PC-3 (cell line): ENCODE measurements at regions of chrX and their contacts with region 1.

Region 1: GRCh38 chrX:80578517-80579105 is 158.4 kb downstream of the TENT5D start:
- DNase-seq: peak; percentile 55
- ATAC-seq: peak; percentile 50; the same call in 1 of the 2 replicates
- H3K4me3 ChIP-seq: no peak overlapping the region
- H3K27ac ChIP-seq: no peak overlapping the region
- H3K4me1 ChIP-seq: no peaks in the 10 kb centered on the region
- H3K27me3 ChIP-seq: no peaks in the 10 kb centered on the region
- CTCF ChIP-seq: peak; percentile 67

Region 2: GRCh38 chrX:80335062-80335830 is 243.4 kb before region 1 on chrX:
- CTCF ChIA-PET with region 1: no interaction called
- POLR2A ChIA-PET with region 1: no interaction called
- intact Hi-C with region 1: loop called (anchors 2 kb)
- DNase-seq: peak; percentile 63
- ATAC-seq: peak; percentile 96
- H3K4me3 ChIP-seq: peak overlapping the region; percentile 82
- H3K27ac ChIP-seq: no peak overlapping the region
- H3K4me1 ChIP-seq: peaks cover 8% of the 10 kb centered on the region; the same call in 1 of the 2 replicates
- H3K27me3 ChIP-seq: no peaks in the 10 kb centered on the region
- CTCF ChIP-seq: peak; percentile 37; the same call in 1 of the 2 replicates

Region 3: DNA sequence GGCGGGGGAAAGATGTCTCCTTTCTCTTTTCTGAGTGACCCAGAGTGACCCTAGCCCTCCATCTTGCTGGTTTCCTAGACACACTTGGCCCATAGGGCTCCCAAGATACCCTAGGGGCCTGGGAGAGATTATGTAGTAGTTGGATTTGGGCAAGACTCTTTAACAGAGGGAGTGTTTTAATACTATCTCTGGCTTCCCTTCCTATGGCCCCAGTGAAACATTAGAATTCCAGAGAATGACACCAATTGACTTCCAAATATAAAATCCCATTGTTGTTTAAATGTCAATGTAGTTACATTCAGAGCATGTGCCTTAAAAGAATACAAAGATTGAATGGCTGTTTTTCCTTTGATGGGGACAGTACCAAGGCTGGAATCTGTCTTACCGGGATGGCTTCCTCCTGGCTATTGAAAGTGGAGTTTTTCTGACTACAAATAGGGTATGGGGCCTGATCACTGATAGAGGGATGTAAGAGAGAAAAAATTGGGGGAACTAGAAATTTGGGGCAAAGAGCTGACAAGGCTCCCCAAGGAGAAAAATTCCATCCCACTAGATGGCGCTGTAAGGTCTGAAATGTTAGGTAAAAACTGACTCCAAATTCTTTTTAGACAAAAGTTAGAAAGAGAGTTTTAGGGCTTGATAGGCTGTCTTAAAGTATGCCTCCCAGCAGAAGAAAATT is 147.6 kb before region 1 on chrX:
- CTCF ChIA-PET with region 1: no interaction called
- POLR2A ChIA-PET with region 1: no interaction called
- intact Hi-C with region 1: loop called (anchors 1 kb)
- DNase-seq: peak; percentile 9
- ATAC-seq: no peak
- H3K4me3 ChIP-seq: no peak overlapping the region
- H3K27ac ChIP-seq: no peak overlapping the region
- H3K4me1 ChIP-seq: no peaks in the 10 kb centered on the region
- H3K27me3 ChIP-seq: no peaks in the 10 kb centered on the region
- CTCF ChIP-seq: peak; percentile 45

Region 4: DNA sequence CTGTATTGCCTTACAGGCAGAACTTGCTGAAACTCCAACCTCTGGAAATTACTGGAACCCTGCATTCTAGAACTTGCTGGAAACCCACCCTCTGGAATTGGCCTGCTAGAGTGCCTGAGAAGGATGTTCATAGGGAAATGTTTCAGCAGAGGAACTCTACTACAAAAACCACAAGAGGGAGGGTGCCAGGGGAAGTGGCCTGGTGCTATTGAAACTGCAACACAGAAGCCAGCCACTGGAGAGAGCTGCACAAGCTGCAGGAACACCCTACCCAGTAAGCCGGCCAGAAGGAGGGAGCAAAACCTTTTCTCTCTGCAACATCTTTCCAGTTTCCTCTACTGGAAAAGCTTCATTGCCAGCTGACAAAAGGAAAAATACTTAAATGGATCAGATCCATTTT is 233.6 kb after region 1 on chrX:
- CTCF ChIA-PET with region 1: no interaction called
- POLR2A ChIA-PET with region 1: no interaction called
- intact Hi-C with region 1: no loop called
- DNase-seq: peak; percentile 26
- ATAC-seq: no peak
- H3K4me3 ChIP-seq: no peak overlapping the region
- H3K27ac ChIP-seq: no peak overlapping the region
- H3K4me1 ChIP-seq: peaks cover 5% of the 10 kb centered on the region; the same call in 1 of the 2 replicates
- H3K27me3 ChIP-seq: no peaks in the 10 kb centered on the region
- CTCF ChIP-seq: no peak